Activated B cell treated with CpG ODN at 0.5 μM for 24 hours (primary cell): ENCODE measurements at regions of chr5 and their contacts with region 1.

Region 1: DNA sequence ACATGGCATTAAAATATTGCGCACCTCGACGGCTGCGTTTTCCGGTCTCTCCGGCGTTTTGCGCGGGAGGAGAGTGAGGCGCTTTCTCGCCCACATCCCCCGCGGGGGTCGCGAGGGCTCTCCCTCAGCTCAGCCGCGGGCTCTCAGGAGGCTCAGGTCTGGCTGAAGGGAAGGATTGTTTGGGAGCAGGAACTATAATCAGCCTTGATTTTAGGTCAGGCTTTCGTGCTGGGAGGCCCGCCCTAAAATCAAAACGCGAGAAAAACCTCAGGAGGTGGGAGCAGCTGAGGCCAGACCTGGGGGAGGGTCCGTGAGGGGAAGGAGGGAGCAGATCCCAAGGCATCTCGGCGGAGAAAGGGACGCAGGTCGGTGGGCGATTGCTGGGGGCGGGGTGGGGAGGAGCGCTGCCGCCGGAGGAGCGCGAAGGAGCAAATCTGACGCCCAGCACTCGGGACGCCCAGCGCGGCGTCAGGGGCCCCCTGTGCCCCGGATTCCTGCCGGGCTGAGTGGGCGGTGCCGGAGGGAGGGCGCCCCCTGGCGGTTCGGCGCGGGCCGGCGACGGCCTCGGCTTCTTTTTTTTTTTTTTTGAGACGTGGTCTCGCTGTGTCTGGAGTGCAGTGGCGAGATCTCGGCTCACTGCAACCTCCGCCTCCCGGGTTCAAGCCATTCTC is 18.7 kb upstream of the RNF130 start:
- DNase-seq: peak; percentile 85
- ATAC-seq: peak; percentile 91
- H3K4me3 Mint-ChIP-seq: peak overlapping the region; percentile 86
- H3K27ac Mint-ChIP-seq: peak overlapping the region; percentile 56
- H3K4me1 Mint-ChIP-seq: peaks cover 15% of the 10 kb centered on the region
- H3K27me3 Mint-ChIP-seq: peaks cover 8% of the 10 kb centered on the region
- CTCF ChIP-seq: no peak

Region 2: DNA sequence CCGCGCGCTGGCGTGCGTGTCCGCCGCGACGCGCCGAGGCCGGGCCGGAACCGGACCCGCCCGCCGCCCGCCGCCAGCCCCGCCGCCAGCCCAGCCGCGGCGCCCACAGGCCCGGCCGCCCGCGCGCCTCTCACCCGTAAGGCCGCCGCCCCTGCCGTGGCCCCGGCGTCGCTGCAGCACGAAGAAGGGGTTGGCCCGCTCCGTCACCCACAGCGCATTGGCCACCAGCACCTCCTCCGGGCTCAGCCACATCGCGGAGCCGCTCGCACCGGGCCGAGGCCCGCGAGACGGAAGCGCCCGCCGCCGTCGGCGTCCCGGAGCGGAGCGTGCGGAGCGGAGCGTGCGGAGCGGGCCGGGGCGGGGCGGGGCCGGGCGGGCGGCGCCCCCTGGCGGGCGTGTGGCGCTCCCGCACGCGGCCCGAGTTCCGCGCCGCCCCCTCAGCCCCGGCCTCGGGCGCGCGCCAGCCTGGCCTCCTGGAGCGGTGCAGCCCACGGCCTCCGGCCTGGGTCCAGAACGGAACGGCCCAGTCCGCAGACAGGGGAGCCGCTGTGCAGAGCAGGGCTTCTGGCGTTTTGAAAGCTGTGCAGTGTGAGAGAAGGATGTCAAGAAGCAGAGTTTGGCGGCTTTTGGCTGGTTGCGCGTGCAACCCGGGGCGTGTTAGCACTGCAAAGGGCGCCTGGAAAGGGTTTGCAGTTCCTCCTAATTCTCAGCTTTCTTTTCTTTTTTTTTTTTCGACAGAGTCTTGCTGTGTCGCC is 182.5 kb before region 1 on chr5 and contains the start of gene TBC1D9B:
- CTCF ChIA-PET with region 1: no interaction called
- POLR2A ChIA-PET with region 1: no interaction called
- intact Hi-C with region 1: loop called (anchors 5 kb)
- DNase-seq: peak; percentile 74
- ATAC-seq: peak; percentile 90
- H3K4me3 Mint-ChIP-seq: peak within 1 kb of the TSS; percentile 87
- H3K27ac Mint-ChIP-seq: peak within 1 kb of the TSS; percentile 83
- H3K4me1 Mint-ChIP-seq: peaks cover 29% of the 10 kb centered on the region
- H3K27me3 Mint-ChIP-seq: no peaks in the 10 kb centered on the region
- CTCF ChIP-seq: no peak
- total RNA-seq, gene TBC1D9B: 111 and 117 TPM in 2 replicates